MCF 10A (cell line): ENCODE measurements at regions of chr15 and their contacts with region 1.

Region 1: GRCh38 chr15:52078876-52079700 is 33.5 kb downstream of the BCL2L10 start:
- DNase-seq: peak; percentile 92
- H3K4me3 Mint-ChIP-seq: peak overlapping the region; percentile 58
- H3K27ac Mint-ChIP-seq: peak overlapping the region; percentile 96
- H3K4me1 Mint-ChIP-seq: peaks cover 45% of the 10 kb centered on the region
- H3K27me3 Mint-ChIP-seq: no peaks in the 10 kb centered on the region
- CTCF ChIP-seq: peak; percentile 85

Region 2: GRCh38 chr15:51982013-51982769 is 96.9 kb before region 1 on chr15:
- CTCF ChIA-PET with region 1: interaction called, 7 read pairs
- POLR2A ChIA-PET with region 1: interaction called, 31 read pairs
- intact Hi-C with region 1: loop called (anchors 1 kb)
- DNase-seq: peak; percentile 78
- H3K4me3 Mint-ChIP-seq: peak overlapping the region; percentile 31
- H3K27ac Mint-ChIP-seq: peak overlapping the region; percentile 77
- H3K4me1 Mint-ChIP-seq: peaks cover 12% of the 10 kb centered on the region
- H3K27me3 Mint-ChIP-seq: no peaks in the 10 kb centered on the region
- CTCF ChIP-seq: peak; percentile 82

Region 3: GRCh38 chr15:52018693-52019387 is 60.2 kb before region 1 on chr15 and contains the start of gene MAPK6:
- CTCF ChIA-PET with region 1: interaction called, 10 read pairs
- POLR2A ChIA-PET with region 1: interaction called, 546 read pairs
- intact Hi-C with region 1: loop called (anchors 1 kb)
- DNase-seq: peak; percentile 90
- H3K4me3 Mint-ChIP-seq: peak within 1 kb of the TSS; percentile 95
- H3K27ac Mint-ChIP-seq: peak within 1 kb of the TSS; percentile 99
- H3K4me1 Mint-ChIP-seq: peaks cover 17% of the 10 kb centered on the region
- H3K27me3 Mint-ChIP-seq: no peaks in the 10 kb centered on the region
- CTCF ChIP-seq: no peak
- total RNA-seq, gene MAPK6: 106 and 114 TPM in 2 replicates

Region 4: GRCh38 chr15:52057996-52058395 is 21.1 kb before region 1 on chr15:
- CTCF ChIA-PET with region 1: interaction called, 5 read pairs
- POLR2A ChIA-PET with region 1: interaction called, 330 read pairs
- intact Hi-C with region 1: no loop called
- DNase-seq: no peak
- H3K4me3 Mint-ChIP-seq: no peak overlapping the region
- H3K27ac Mint-ChIP-seq: no peak overlapping the region
- H3K4me1 Mint-ChIP-seq: no peaks in the 10 kb centered on the region
- H3K27me3 Mint-ChIP-seq: no peaks in the 10 kb centered on the region
- CTCF ChIP-seq: no peak

Region 5: DNA sequence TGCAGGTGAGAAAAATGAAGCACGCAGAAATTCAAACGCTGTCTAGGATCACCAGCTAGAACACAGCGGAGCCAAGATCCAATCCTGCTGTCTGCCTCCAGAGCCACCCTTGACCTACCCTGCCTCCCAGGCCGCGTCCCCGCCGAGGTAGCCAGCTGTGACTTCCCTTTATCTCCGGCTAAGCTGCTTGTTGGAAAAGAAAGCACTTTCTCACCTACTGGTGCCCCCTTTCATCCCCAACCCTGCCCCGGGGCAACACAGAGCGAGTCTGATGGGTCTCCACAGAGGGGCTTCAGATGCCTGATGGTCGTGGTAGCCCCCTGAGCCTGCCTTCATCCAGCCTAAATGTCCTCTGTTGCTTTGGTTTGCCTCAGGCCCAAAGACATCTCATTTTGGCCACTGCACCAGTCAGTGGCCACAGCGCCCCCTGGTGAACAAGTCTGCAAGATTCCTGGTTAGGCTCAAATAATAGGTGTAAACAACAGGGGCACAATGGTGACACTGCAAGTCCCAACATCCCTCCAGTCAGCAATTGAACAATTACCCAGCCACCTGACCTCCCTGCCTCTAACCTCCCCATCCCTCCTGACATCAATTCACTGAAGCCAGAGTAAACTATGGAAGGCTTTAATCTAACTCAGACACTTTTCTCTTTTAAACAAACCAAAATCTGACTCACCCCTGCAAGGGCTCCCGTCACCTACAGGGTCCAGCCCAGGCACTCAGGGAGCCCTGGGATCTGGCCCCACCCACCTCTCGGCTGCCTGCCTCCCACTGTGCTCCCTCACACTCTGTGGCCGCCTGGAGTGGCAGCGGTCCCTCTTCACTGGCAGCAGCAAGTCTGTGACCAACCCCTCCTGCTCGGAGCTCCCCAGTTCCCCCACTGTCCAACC is 60.8 kb after region 1 on chr15:
- CTCF ChIA-PET with region 1: interaction called, 24 read pairs
- POLR2A ChIA-PET with region 1: interaction called, 12 read pairs
- intact Hi-C with region 1: loop called (anchors 2 kb)
- DNase-seq: peak; percentile 80
- H3K4me3 Mint-ChIP-seq: no peak overlapping the region
- H3K27ac Mint-ChIP-seq: peak overlapping the region; percentile 91
- H3K4me1 Mint-ChIP-seq: peaks cover 23% of the 10 kb centered on the region
- H3K27me3 Mint-ChIP-seq: no peaks in the 10 kb centered on the region
- CTCF ChIP-seq: peak; percentile 83

Region 6: DNA sequence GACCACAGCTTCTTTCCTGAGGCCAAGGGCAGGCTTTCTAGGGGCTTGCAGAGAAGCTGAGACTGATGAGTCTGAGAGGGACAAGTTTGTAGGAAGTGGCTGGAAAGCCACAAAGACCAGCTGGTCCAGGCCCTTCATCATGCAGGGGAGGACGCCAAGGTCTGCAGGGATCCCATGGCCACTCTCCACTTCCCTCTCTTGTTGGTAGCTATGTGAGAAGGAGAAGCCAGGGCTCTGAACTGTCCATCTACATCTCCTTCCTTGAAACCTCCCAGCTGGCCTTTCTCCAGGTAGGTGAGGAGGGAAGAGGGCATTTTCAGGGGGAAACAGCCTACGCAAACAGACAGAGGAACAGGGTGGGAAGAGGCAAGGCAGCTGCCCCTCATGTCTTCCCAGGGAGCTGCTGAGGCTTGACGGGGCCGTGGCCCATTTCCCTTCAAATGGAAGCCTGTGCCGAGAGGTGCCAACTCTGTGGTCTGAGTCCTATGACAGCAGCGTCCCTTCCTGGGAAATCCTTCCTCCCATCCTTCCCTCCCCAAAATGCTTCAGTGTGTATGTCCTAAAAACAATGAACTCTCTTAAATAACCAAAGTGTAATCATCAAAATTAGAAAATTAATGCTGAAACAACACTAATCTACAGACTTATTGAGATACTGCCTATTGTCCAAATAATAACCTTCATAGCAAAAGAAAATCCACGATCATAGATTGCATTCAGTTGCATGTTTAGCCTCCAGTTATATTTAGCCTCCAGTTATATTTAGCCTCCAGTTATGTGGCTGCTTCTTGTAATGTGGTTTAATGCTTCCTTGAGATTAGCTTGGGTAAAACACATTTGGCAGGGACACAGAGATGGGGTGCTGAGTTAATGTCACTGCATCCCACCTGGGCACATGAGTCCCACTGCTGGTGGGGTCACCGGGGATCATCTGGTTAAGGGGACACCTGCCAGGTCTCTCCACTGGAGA is 76.1 kb after region 1 on chr15:
- CTCF ChIA-PET with region 1: no interaction called
- POLR2A ChIA-PET with region 1: no interaction called
- intact Hi-C with region 1: no loop called
- DNase-seq: no peak
- H3K4me3 Mint-ChIP-seq: no peak overlapping the region
- H3K27ac Mint-ChIP-seq: no peak overlapping the region
- H3K4me1 Mint-ChIP-seq: no peaks in the 10 kb centered on the region
- H3K27me3 Mint-ChIP-seq: no peaks in the 10 kb centered on the region
- CTCF ChIP-seq: no peak

Region 7: GRCh38 chr15:52200831-52201365 is 121.8 kb after region 1 on chr15:
- CTCF ChIA-PET with region 1: no interaction called
- POLR2A ChIA-PET with region 1: no interaction called
- intact Hi-C with region 1: no loop called
- DNase-seq: no peak
- H3K4me3 Mint-ChIP-seq: no peak overlapping the region
- H3K27ac Mint-ChIP-seq: no peak overlapping the region
- H3K4me1 Mint-ChIP-seq: no peaks in the 10 kb centered on the region
- H3K27me3 Mint-ChIP-seq: no peaks in the 10 kb centered on the region
- CTCF ChIP-seq: no peak